Posterior vena cava (tissue), 2 donors: ENCODE measurements at regions of chr1 and their contacts with region 1.

Region 1: DNA sequence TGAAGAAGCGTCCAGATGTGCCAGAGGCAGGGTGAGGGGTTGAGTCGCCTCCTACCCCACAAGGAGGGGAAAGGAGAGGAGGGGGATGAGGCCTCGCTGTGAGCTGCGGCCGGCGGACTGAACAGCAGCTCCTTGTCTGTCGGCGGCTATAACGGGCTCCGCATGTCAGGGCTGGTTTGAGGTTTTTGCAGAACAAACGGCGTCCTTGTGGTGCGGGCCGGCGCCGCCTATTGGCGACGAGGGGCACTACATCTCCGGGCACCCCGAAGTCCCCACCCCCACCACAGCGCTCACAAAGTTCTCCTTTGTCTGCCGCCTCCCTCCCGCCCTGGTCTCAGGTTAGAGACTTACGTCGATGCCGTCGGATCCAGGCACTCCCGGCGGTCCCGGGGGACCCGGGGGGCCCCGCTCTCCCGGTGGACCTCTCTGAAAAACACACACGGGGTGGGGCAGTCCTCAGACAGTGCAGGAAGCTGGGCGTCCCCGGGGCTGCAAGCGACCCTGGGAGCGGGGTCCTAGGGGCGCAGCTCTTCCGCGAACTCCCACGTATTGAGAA is 1.8 kb downstream of the COL9A2 start:
- DNase-seq: peak; percentile 95

Region 2: DNA sequence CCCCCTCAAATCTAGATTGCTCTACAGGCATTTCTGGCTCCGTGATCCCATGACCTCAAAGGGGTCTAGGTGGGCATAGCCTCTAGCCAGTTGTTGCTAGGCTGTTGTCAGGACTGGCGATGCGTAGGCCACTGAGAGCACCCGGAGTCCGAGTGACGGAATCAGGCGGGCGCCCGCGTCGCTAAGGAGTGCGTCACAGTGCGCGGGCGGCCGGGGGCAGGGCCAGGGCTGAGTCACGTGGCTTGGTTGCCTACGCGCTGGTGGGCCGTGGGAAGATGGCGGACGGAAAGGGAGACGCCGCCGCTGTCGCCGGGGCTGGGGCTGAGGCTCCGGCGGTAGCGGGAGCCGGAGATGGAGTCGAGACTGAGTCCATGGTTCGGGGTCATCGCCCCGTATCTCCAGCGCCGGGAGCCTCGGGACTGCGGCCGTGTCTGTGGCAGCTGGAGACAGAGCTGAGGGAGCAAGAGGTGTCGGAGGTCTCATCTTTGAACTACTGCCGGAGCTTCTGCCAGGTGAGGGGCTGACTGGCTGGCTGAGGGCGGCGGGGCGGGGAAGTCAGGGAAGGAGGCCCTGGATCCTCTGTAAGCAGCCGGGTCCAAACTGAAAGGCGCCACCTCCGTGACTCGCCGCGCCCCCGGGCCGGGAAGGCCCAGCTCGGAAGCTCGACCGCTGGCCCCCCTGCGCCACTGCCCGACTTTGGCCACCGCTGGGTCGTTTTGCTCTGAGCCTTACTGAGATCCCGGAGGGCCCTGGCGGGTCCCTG is 154.0 kb before region 1 on chr1 and contains the start of gene RLF:
- intact Hi-C with region 1: loop called in 1 of 2 experiments (anchors 5 kb)
- DNase-seq: peak; percentile 99
- total RNA-seq, gene RLF: 14.4 to 18.1 TPM

Region 3: GRCh38 chr1:40344597-40344996 is 29.3 kb after region 1 on chr1:
- intact Hi-C with region 1: no loop called
- DNase-seq: peak; percentile 86

Region 4: GRCh38 chr1:40399984-40400704 is 84.8 kb after region 1 on chr1:
- intact Hi-C with region 1: no loop called
- DNase-seq: no peak